PC-9 (cell line): ENCODE measurements at regions of chrX and their contacts with region 1.

Region 1: DNA sequence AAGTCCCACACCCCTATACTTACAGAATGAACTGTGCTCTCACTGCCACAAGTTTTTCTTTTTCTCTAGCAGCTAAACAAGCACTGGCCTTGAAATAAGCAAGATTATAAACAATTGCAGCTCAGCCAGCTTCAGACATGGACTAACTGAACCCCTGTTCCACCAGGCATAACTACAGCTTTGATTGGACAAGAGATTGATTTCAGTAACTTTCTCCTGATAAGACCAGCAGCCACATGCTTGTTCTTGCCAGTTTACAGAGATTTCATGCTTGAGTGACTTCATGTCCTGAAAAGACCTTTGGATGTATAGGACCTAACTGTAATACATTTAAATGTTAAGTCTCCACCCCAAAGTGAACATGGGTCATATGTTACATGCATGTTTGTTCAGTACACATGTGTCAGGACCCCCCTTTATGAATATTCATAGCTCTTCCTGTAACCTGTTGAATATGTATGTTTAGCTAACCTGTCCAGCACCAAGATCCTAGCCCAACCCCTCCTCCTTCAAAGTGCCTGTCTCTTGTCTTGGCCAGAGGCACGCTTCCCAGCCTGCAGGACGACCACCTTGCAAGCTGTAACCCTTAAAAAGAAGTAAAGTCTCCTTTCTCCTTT is 27.9 kb downstream of the ZNF275 start:
- DNase-seq: no peak
- H3K4me3 ChIP-seq: no peak overlapping the region
- H3K27ac ChIP-seq: no peak overlapping the region
- H3K4me1 ChIP-seq: no peaks in the 10 kb centered on the region
- H3K27me3 ChIP-seq: peaks cover 18% of the 10 kb centered on the region
- CTCF ChIP-seq: no peak

Region 2: GRCh38 chrX:152131525-152131924 is 1230.4 kb before region 1 on chrX:
- CTCF ChIA-PET with region 1: interaction called, 13 read pairs
- POLR2A ChIA-PET with region 1: no interaction called
- intact Hi-C with region 1: no loop called
- DNase-seq: no peak
- H3K4me3 ChIP-seq: no peak overlapping the region
- H3K27ac ChIP-seq: no peak overlapping the region
- H3K4me1 ChIP-seq: peaks cover 17% of the 10 kb centered on the region
- H3K27me3 ChIP-seq: no peaks in the 10 kb centered on the region
- CTCF ChIP-seq: no peak

Region 3: DNA sequence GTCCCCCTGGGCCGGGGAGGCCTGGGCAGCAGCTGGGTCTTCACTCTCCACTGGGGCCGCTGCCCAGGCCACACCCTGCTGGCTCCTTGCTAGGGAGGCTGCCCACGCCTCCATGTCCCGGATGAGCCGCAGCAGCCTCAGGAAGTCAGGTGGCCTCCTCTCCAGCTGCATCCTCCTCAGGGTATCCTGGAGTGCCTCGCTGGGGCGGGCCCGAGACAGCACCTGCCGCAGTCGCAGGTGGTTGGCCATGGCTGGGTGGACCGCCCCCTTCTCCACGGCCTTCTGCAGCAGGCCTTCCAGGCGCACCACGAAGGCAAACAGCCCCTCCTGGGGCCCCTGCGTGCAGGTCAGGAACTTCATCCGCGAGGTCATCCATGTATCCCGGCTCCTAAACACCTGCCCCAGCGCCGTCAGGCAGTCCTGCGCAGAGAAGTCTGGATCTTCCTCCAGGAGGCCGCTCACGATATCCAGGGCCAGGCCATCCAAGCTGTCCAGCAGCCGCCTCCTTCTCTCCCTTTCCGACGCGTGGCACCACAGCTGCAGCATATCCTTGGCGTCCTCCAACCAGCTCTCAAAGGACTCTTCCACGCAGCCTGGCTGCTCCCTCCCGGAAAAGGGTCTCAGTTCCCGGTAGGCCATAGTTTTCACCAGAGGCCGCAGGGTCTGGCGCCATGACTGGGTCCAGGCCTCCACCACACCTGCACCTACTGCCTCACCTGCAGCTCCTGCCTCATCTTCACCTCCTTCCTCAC is 42.4 kb before region 1 on chrX:
- CTCF ChIA-PET with region 1: no interaction called
- POLR2A ChIA-PET with region 1: no interaction called
- intact Hi-C with region 1: loop called (anchors 5 kb)
- DNase-seq: no peak
- H3K4me3 ChIP-seq: no peak overlapping the region
- H3K27ac ChIP-seq: no peak overlapping the region
- H3K4me1 ChIP-seq: no peaks in the 10 kb centered on the region
- H3K27me3 ChIP-seq: peaks cover 36% of the 10 kb centered on the region; the same call in 1 of the 2 replicates
- CTCF ChIP-seq: no peak